ENCODE measurements at regions of chr4 and their contacts with region 1.

Region 1: DNA sequence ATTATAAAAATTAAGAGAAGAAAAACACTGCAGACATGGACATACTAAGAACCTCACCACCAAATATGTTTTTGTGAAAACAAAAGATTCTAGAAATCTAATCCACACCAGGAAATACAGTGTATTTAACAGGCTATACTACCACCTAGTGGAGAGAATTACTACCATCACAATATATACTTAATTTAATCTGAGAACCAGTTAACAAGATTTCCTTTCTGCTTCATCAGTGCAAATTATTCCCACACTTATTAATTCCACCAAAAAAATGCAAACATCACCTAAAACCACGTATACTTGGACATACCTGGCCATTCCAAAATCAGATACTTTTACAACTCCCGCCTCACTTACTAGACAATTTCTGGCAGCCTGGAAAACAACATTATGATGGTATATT is 7.0 kb upstream of the TXK start:
- DNase-seq: no peak
- H3K4me3 Mint-ChIP-seq: no peak overlapping the region
- H3K27ac Mint-ChIP-seq: peak overlapping the region; percentile 1
- H3K4me1 Mint-ChIP-seq: peaks cover 52% of the 10 kb centered on the region
- H3K27me3 Mint-ChIP-seq: no peaks in the 10 kb centered on the region

Region 2: DNA sequence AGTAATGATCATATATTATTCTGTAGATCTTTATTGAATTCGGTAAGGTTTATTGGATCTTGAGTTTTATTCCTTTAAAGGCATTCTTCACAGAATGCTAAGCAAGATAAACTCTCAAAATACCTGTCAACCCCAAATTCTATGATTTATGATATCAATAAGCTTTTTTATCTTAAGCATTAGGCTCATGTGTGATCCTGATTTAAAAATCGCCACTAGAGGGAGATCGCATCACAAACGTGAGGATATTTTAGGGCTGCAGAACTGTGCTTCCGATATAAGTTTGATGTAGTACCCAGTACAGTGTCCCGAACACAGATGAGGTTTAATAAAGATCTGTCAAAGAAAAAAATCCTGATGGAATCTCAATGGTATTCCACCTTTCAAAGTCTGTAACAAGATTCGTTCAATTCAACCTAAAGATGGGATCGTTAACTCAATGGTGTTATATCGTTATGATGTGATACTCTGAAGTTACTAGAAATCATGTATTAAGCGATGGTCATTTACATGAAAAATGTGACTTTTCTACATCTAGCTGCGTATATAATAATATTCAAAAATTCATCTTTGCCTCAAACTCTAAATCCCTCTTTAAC is 472.1 kb before region 1 on chr4:
- intact Hi-C with region 1: loop called (anchors 5 kb)
- DNase-seq: no peak
- H3K4me3 Mint-ChIP-seq: no peak overlapping the region
- H3K27ac Mint-ChIP-seq: no peak overlapping the region
- H3K4me1 Mint-ChIP-seq: no peaks in the 10 kb centered on the region
- H3K27me3 Mint-ChIP-seq: peaks cover 14% of the 10 kb centered on the region

Region 3: GRCh38 chr4:47686294-47686872 is 454.7 kb before region 1 on chr4:
- intact Hi-C with region 1: loop called (anchors 1 kb)
- DNase-seq: peak; percentile 29
- H3K4me3 Mint-ChIP-seq: no peak overlapping the region
- H3K27ac Mint-ChIP-seq: no peak overlapping the region
- H3K4me1 Mint-ChIP-seq: no peaks in the 10 kb centered on the region
- H3K27me3 Mint-ChIP-seq: peaks cover 8% of the 10 kb centered on the region

Region 4: DNA sequence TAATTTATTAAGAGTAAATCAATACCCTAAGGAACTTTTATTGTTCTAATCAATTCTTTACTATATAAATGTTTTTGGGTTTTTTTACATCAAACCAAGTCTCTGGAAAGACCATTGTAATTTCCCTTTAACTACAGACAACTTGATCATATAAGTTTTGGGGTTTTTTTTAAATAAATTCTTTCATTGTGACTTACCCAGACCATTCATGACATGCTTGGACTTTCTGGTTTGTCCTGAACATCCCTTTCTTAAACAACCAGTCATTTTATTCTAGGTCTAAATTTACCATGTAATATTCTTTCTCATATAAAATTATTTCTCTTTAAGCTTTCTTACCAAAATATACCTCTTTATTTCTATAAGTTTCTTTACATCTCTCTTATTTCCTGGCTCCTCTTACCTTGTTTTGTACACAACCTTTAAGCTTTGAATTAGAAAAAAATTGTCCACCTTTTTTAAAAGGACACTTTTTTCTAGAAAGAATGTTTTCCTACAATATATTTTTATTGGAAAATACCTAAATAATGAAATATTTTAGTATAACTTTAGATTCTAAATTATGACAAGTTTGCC is 132.9 kb before region 1 on chr4:
- intact Hi-C with region 1: loop called (anchors 1 kb)
- DNase-seq: no peak
- H3K4me3 Mint-ChIP-seq: no peak overlapping the region
- H3K27ac Mint-ChIP-seq: no peak overlapping the region
- H3K4me1 Mint-ChIP-seq: no peaks in the 10 kb centered on the region
- H3K27me3 Mint-ChIP-seq: no peaks in the 10 kb centered on the region

Region 5: DNA sequence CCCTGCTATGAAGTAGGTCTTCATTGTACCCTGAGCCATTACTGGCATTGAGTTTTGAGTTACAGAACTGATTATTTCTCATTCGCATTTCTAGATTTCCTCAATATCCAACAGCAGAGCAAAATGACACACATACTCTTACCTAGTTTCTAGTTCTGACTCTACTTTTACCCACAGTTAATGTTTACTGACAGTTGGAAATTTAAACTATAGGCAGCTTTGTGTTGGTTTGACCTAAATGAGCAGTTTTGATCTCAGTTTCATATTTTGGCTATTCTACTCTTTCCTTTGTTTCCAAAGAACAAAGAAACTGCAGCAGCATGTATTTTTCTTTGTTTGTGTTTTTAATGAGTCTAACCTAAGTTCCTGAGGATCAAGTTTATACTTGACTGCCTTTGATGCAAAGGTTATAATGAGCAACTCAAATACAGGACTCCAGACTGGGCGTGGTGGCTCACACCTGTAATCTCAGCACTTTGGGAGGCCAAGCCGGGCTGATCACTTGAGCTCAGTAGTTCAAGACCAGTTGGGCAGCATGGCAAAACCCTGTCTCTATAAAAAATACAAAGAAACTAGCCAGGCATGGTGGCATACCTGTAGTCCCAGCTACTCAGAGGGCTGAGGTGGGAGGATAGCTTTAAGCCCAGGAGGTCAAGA is 37.4 kb before region 1 on chr4:
- intact Hi-C with region 1: loop called (anchors 1 kb)
- DNase-seq: no peak
- H3K4me3 Mint-ChIP-seq: no peak overlapping the region
- H3K27ac Mint-ChIP-seq: peak overlapping the region; percentile 63
- H3K4me1 Mint-ChIP-seq: peaks cover 24% of the 10 kb centered on the region
- H3K27me3 Mint-ChIP-seq: no peaks in the 10 kb centered on the region

Region 6: GRCh38 chr4:48109413-48110263 is 31.4 kb before region 1 on chr4:
- intact Hi-C with region 1: loop called (anchors 1 kb)
- DNase-seq: no peak
- H3K4me3 Mint-ChIP-seq: no peak overlapping the region
- H3K27ac Mint-ChIP-seq: peak overlapping the region; percentile 21
- H3K4me1 Mint-ChIP-seq: peaks cover 33% of the 10 kb centered on the region
- H3K27me3 Mint-ChIP-seq: no peaks in the 10 kb centered on the region

Measured in activated T-helper 1 cell treated with anti-CD3 and anti-CD28 coated beads, Interleukin-12 subunit alpha, Interleukin-12 subunit beta, Interleukin-2, Interleukin-4 antibody, amounts not matched to agents 30 ng/mL and 10 ng/mL and 1 ng/mL, durations not matched to agents 14 hours and 24 hours and 36 hours (primary cell).